ENCODE measurements at regions of chr11 and their contacts with region 1.

Region 1: GRCh38 chr11:57644748-57645688 is 4.7 kb downstream of the YPEL4 start:
- DNase-seq: peak; percentile 92
- H3K4me3 Mint-ChIP-seq: no peak overlapping the region
- H3K27ac Mint-ChIP-seq: no peak overlapping the region
- H3K4me1 Mint-ChIP-seq: peaks cover 47% of the 10 kb centered on the region
- H3K27me3 Mint-ChIP-seq: peaks cover 81% of the 10 kb centered on the region

Region 2: GRCh38 chr11:57345555-57346211 is 299.3 kb before region 1 on chr11:
- CTCF ChIA-PET with region 1: interaction called, 10 read pairs
- DNase-seq: peak; percentile 78
- H3K4me3 Mint-ChIP-seq: no peak overlapping the region
- H3K27ac Mint-ChIP-seq: no peak overlapping the region
- H3K4me1 Mint-ChIP-seq: no peaks in the 10 kb centered on the region
- H3K27me3 Mint-ChIP-seq: peaks cover 53% of the 10 kb centered on the region

Region 3: DNA sequence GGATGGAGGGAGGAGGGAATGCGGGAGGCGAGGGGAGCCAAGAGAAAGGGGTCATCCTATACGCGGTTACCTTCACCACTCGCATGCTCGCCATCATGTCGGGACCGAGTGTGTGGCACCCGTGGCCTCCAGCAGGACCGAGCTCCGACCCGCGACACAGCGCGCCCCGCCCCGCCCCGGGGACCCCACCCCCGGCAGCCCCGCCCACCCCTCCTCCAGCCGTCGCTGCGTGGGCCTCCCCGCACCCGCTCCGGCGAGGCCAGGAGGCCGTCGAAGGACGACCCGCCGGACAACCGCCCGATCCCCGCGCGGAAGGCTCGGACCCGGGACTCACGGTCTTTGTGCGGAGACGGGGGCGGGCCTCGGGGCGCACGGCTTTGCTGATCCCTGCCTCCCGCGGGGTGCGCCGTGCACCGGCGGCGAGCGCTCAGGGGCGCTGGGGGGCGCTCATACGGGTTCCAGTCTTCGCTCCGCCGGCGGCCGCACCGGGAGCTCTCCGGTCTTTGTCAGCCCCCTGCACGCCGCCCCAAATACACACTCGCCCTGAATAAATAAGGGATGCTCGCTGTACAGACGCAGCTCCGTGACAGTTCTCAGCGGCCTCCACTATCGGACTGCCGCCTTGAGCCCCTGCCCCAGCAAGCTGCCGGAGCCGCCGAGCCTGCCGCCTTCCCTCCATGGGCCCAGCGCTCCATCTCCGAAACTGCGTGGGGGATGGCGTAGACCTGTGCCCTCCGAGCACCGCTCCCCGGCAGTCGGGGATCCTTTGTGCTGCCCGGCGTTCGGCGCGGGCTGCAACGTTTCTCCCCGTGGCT is 77.3 kb before region 1 on chr11 and contains the start of gene UBE2L6:
- CTCF ChIA-PET with region 1: interaction called, 266 read pairs
- DNase-seq: peak; percentile 92
- H3K4me3 Mint-ChIP-seq: peak within 1 kb of the TSS; percentile 100
- H3K27ac Mint-ChIP-seq: peak within 1 kb of the TSS; percentile 99
- H3K4me1 Mint-ChIP-seq: peaks cover 54% of the 10 kb centered on the region
- H3K27me3 Mint-ChIP-seq: peaks cover 8% of the 10 kb centered on the region

Region 4: DNA sequence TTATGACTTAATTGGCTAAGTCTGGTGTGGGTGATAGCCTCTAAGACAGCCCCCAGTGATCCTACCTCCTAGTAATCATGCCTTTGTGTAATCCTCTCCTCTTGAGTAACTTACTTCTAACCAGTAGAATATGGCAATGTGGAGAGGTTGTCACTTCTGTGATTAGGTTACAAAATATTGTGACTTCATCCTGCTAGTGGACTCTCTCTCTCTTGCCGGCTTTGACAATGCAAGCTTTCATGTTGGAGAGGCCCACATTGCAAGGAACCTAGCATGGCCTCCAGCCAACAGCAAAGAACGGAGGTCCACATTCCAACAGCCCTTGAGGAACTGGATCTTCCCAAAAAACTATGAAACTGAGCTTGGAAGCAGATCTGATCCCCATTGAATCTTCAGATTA is 14.8 kb before region 1 on chr11:
- CTCF ChIA-PET with region 1: interaction called, 21 read pairs
- DNase-seq: no peak
- H3K4me3 Mint-ChIP-seq: no peak overlapping the region
- H3K27ac Mint-ChIP-seq: no peak overlapping the region
- H3K4me1 Mint-ChIP-seq: no peaks in the 10 kb centered on the region
- H3K27me3 Mint-ChIP-seq: peaks cover 43% of the 10 kb centered on the region

Region 5: GRCh38 chr11:57823859-57824258 is 178.8 kb after region 1 on chr11:
- CTCF ChIA-PET with region 1: no interaction called
- DNase-seq: no peak
- H3K4me3 Mint-ChIP-seq: no peak overlapping the region
- H3K27ac Mint-ChIP-seq: no peak overlapping the region
- H3K4me1 Mint-ChIP-seq: no peaks in the 10 kb centered on the region
- H3K27me3 Mint-ChIP-seq: peaks cover 10% of the 10 kb centered on the region

Region 6: GRCh38 chr11:57913715-57914704 is 269.0 kb after region 1 on chr11:
- CTCF ChIA-PET with region 1: no interaction called
- DNase-seq: no peak
- H3K4me3 Mint-ChIP-seq: no peak overlapping the region
- H3K27ac Mint-ChIP-seq: no peak overlapping the region
- H3K4me1 Mint-ChIP-seq: no peaks in the 10 kb centered on the region
- H3K27me3 Mint-ChIP-seq: peaks cover 4% of the 10 kb centered on the region

Region 7: DNA sequence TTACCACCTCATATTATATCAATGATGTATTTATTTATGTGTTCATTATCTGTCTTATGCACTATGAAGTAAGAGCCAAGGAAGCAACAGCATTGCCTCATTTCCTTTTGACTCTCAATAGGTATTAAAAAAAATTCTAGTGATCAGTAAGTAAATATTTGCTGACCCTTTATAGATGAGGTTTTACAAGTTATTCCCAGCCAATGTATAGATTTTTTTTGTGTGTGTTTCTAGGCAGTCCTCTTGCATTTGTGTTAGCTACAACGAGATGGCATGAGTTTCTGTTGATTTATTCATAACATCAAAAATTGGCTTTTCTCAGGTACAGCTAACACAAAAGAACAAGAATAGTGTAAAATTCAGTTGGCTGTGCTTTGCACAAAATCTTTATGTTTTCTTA is 554.3 kb after region 1 on chr11:
- CTCF ChIA-PET with region 1: no interaction called
- DNase-seq: no peak
- H3K4me3 Mint-ChIP-seq: no peak overlapping the region
- H3K27ac Mint-ChIP-seq: no peak overlapping the region
- H3K4me1 Mint-ChIP-seq: no peaks in the 10 kb centered on the region
- H3K27me3 Mint-ChIP-seq: no peaks in the 10 kb centered on the region